PC-9 (cell line): ENCODE measurements at regions of chr14 and their contacts with region 1.

Region 1: DNA sequence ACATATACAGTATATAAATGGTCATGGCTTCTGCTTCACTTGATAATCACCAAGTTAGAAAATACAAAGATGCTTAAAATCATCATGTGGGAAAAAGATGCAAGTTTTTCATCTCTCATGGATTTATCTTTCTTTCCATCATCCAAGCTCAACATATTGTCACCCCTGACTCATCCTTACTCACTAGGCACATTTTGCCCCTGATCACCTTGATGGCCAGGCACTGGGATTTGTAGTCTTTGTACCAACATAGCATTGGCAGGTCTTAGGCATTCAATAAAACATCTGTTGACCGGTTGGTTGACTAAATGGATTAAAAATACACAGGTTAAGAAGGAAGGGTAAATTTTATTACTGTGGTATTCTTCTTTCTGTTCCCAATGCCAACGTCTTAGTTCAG is 28.1 kb downstream of the KLHDC2 start:
- DNase-seq: no peak
- H3K4me3 ChIP-seq: no peak overlapping the region
- H3K27ac ChIP-seq: no peak overlapping the region
- H3K4me1 ChIP-seq: no peaks in the 10 kb centered on the region
- H3K27me3 ChIP-seq: no peaks in the 10 kb centered on the region
- CTCF ChIP-seq: no peak

Region 2: DNA sequence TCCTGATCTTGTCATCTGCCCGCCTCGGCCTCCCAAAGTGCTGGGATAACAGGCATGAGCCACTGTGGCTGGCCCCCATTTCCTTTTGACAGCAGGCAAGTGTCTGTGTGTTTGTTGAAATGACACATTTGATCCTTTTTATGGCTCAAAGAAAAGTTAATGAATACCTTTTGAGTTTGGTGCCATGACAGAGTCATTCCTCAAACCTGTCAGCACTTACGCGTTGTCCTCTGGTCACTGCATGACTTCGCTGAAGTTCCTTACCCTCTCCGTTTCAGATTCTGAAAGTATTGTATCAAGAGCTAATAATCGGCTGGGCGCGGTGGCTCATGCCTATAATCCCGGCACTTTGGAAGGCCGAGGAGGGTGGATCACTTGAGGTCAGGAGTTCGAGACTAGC is 24.2 kb after region 1 on chr14:
- CTCF ChIA-PET with region 1: no interaction called
- POLR2A ChIA-PET with region 1: interaction called, 10 read pairs
- intact Hi-C with region 1: no loop called
- DNase-seq: no peak
- H3K4me3 ChIP-seq: no peak overlapping the region
- H3K27ac ChIP-seq: no peak overlapping the region
- H3K4me1 ChIP-seq: no peaks in the 10 kb centered on the region
- H3K27me3 ChIP-seq: no peaks in the 10 kb centered on the region
- CTCF ChIP-seq: no peak

Region 3: GRCh38 chr14:50363714-50364111 is 567.7 kb after region 1 on chr14:
- CTCF ChIA-PET with region 1: no interaction called
- POLR2A ChIA-PET with region 1: no interaction called
- intact Hi-C with region 1: no loop called
- DNase-seq: no peak
- H3K4me3 ChIP-seq: no peak overlapping the region
- H3K27ac ChIP-seq: no peak overlapping the region
- H3K4me1 ChIP-seq: peaks cover 28% of the 10 kb centered on the region
- H3K27me3 ChIP-seq: no peaks in the 10 kb centered on the region
- CTCF ChIP-seq: no peak